Stomach (tissue), 19 donors: ENCODE measurements at regions of chr19 and their contacts with region 1.

Region 1: GRCh38 chr19:28878862-28879566 is 333.9 kb downstream of the UQCRFS1 start:
- DNase-seq: peak; percentile 77 to 93
- H3K4me3 ChIP-seq: no peak overlapping the region
- H3K27ac ChIP-seq: no peak overlapping the region
- H3K4me1 ChIP-seq: peaks cover 0 to 35% (median 6%) of the 10 kb centered on the region in 4 donors
- H3K27me3 ChIP-seq: peaks cover 0 to 19% (median 0%) of the 10 kb centered on the region in 3 donors
- CTCF ChIP-seq: peak in 5 of 7 experiments; percentile 41 to 68 (median 60)
- EP300 ChIP-seq: no peak
- POLR2A ChIP-seq: no peak

Region 2: DNA sequence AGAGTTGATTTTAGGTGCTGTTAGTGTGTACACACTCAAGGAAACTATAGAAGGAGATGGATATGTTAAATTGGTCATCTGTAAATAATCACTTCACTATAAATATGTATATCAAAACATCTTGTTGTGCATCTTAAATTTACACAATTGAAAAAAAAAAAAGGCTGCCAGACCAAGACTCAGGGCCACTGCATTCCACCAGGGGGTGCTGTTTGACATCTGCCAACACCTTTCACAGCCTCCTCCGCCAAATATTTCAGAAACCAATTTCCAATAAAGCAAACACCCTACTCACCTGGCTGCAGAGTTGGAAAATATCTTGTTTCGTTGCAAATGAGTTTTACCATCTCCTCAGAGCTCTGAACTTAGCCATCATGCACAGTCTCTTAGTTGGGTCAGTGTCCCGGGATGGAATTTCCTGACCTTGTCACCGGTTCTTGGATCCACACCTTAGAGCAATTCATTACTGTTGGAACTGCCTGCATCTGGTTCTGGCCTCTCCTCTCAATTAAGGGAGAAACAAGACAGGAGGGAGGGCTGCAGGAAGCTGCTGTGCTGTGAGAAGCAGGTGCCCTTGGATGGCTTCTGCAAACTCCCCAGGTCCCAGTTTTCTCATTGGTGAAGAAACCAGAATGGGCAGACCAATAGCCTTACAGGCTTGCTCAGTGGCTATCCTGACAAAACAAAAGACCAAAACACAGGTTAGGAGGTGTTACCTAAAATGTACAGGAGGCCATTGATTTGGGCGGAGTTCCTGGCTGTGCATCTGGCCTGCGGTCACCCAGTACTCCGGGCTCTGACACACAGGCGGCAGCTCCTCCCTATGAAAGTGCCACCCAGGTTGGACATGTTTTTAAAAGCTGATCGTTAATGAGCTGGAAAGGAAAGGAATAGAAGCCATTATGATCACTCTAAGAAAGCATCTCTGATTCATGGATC is 412.6 kb before region 1 on chr19:
- intact Hi-C with region 1: loop called (anchors 10 kb)
- DNase-seq: peak; percentile 61 to 89
- H3K4me3 ChIP-seq: no peak overlapping the region
- H3K27ac ChIP-seq: no peak overlapping the region
- H3K4me1 ChIP-seq: peaks cover 0 to 14% (median 3%) of the 10 kb centered on the region in 4 donors
- H3K27me3 ChIP-seq: peaks cover 0 to 20% (median 0%) of the 10 kb centered on the region in 3 donors
- CTCF ChIP-seq: peak in 5 of 7 experiments; percentile 62 to 76 (median 72)
- EP300 ChIP-seq: no peak
- POLR2A ChIP-seq: no peak

Region 3: DNA sequence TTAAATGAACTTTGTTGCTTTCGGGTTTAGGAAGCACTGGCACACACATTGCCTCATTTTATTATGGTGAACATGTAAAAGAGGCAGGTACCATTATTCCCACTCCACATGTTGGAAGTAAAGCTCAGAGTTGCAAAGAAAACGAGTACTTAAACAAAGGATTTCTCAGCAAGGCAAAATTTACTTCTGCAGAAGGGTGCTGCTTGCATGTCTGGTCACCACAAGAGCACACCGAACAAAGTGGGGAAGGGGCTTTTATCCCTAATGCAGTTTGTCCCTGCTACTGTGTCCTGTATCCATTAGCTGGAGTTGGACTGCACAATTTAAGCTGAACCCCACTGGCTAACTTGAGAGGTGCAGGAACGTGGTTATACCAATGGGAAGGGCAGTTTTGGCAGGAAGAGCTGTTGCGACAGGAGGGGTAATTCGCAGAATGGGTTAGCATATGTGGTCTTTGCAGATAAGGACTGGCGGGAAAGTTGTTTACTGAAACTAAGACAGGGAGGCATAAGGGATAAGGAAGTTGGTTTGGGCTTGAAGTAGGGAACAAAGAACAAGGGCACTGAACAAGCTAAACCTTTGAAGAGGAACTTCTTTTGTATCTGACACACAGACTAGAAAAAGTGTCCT is 211.6 kb before region 1 on chr19:
- intact Hi-C with region 1: no loop called
- DNase-seq: no peak
- H3K4me3 ChIP-seq: no peak overlapping the region
- H3K27ac ChIP-seq: no peak overlapping the region
- H3K4me1 ChIP-seq: no peaks in the 10 kb centered on the region
- H3K27me3 ChIP-seq: no peaks in the 10 kb centered on the region
- CTCF ChIP-seq: no peak
- EP300 ChIP-seq: no peak
- POLR2A ChIP-seq: no peak

Region 4: DNA sequence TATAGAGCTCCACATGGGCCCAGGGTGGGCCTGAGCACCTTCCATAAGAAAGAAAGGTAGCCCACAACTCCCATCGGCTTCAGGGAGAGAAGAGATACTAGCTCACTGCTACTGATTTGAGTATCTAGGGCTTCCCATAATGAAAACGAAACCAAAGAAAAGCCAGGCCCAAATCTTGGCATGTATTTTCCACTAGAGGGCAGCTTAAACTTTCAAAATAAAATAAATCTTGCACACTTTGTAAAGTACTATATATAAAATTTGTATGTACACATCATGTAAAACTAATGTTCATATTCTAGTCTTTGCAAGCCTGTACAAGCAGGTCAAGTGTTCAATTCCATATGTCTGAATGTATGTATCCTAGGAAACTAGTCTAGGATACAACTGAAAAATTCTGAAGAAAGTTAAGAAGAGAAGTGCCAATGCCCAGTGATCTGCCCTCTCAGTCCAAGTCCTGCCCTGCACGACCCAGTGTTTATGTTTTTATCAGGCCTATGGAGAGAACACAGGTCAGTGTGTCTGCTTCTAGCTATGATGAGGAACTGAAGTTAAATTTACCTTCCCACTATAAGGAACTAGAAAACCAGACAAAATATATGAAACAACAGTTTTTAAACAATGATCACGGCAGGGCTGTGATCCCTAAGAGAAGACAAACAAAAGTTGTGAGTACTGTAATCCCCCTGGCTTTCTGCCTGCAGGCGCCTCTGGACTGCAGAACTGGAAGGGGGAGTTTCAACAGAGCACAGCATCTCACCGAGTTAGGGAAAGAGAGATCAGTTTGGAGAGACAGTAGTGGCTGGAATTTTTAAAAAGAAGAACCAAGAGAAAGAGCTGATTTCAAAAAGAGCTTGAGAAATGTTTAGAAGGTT is 141.8 kb before region 1 on chr19:
- intact Hi-C with region 1: loop called (anchors 5 kb)
- DNase-seq: peak in 1 of 2 donors; percentile 74
- H3K4me3 ChIP-seq: no peak overlapping the region
- H3K27ac ChIP-seq: peak overlapping the region in 1 of 5 donors; percentile 34
- H3K4me1 ChIP-seq: peaks cover 0 to 14% (median 6%) of the 10 kb centered on the region in 4 donors
- H3K27me3 ChIP-seq: no peaks in the 10 kb centered on the region
- CTCF ChIP-seq: peak in 5 of 7 experiments; percentile 13 to 54 (median 51)
- EP300 ChIP-seq: no peak
- POLR2A ChIP-seq: no peak

Region 5: GRCh38 chr19:29001141-29001581 is 122.1 kb after region 1 on chr19:
- intact Hi-C with region 1: no loop called
- DNase-seq: no peak
- H3K4me3 ChIP-seq: no peak overlapping the region
- H3K27ac ChIP-seq: no peak overlapping the region
- H3K4me1 ChIP-seq: no peaks in the 10 kb centered on the region
- H3K27me3 ChIP-seq: peaks cover 0 to 5% (median 0%) of the 10 kb centered on the region in 3 donors
- CTCF ChIP-seq: no peak
- EP300 ChIP-seq: no peak
- POLR2A ChIP-seq: no peak